Ascending aorta (tissue), 2 donors: ENCODE measurements at regions of chr6 and their contacts with region 1.

Region 1: DNA sequence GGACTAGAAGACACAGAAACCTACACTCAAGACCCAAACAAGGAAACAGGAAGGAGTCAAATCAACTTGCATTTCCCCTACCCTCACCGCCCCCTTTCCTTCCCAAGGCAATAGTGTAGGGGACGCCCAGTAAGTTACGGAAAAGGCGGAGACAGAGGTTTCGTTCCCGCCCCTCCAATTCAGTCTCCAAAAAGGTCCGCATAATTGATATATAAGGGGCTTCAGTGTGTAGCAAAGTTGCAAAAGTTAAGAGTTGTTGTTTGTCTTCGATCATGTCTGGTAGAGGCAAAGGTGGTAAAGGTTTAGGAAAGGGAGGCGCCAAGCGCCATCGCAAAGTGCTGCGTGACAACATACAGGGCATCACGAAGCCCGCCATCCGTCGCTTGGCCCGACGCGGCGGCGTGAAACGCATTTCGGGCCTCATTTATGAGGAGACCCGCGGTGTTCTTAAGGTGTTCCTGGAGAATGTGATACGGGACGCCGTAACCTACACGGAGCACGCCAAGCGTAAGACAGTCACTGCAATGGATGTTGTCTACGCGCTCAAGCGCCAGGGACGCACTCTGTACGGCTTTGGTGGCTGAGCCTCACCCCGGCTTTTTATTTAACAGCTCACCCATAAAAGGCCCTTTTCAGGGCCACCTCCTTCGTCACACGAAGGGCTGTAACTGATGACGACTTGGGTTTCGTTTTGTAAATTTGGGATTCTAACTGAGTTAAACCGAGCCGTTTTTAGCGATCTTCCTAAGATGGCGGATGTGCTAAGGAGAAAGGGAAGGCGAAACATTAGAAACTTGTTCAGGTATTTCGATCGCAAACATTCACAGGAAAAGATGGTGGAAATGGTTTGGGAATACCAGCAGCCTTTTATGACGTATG is 124.6 kb upstream of the BTN3A2 start:
- DNase-seq: no peak
- H3K4me3 ChIP-seq: peak overlapping the region; percentile 70 to 72
- H3K27ac ChIP-seq: peak overlapping the region; percentile 91 to 93
- H3K4me1 ChIP-seq: no peaks in the 10 kb centered on the region
- H3K27me3 ChIP-seq: no peaks in the 10 kb centered on the region
- CTCF ChIP-seq: no peak

Region 2: DNA sequence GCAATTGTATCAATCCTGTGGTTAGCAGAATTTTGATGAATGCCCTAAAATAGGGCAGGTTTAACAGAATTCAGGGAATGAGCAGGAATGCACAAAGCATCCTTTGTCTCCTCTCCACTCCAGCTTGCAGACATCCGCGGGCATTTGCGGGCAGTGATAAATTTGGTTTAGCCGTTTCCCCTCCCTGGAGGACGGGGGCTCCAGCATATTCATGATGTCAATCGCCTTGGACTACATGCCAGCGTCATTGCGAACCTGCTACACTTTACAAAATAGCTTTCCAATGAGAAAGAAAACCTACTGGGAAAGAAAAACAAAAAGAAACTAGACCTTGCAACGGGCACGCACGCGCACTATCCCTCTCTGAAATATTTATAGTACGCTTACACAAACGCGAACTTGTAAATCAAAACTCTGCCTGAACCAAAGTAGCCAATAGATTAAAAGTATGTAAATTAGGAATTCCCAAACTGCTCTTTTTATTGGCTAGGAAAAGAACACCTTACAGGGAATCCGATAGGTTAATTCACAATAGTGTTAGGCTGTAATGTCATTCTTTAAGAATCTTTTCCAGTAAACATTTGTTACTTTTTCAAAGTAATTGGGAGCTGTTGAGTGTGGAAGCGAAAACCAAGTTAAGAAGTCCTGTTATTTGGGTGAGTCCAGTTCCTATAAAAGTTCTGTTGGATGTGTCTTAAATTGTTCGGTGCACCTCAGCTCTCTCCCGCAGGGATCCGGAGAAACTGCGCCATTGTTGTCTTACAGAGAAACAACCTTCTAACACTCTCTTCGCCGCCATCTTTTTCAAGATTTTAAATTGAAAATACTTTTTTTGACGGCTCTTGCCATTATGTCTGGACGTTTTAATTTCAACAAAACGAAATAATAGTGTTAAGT is 16.5 kb before region 1 on chr6:
- intact Hi-C with region 1: loop called (anchors 2 kb)
- DNase-seq: peak in 1 of 2 donors; percentile 87
- H3K4me3 ChIP-seq: peak overlapping the region; percentile 64 to 65
- H3K27ac ChIP-seq: peak overlapping the region; percentile 82 to 92
- H3K4me1 ChIP-seq: no peaks in the 10 kb centered on the region
- H3K27me3 ChIP-seq: no peaks in the 10 kb centered on the region
- CTCF ChIP-seq: no peak